Tibial artery (tissue), 4 donors: ENCODE measurements at regions of chr5 and their contacts with region 1.

Region 1: DNA sequence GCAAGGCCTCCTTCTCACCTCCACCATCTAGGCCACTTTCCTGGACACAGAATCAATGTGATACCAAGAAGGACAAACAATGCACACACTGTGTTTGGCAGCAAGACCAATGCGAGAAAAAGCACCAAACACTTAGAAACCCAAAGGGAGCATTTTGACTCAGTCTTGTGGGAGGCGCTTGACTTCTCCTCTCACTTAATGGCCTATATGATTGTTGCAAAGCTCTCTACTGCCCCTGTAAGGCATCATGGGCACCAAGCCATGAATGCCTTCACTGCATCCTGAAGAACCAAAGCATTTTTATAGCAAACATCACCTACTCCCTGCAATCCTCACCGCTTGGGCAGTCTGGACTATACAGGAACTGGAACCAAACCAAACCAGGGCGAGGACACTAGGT is 57.5 kb downstream of the CDH6 start:
- DNase-seq: no peak
- H3K4me3 ChIP-seq: no peak overlapping the region
- H3K27ac ChIP-seq: no peak overlapping the region
- H3K4me1 ChIP-seq: no peaks in the 10 kb centered on the region
- H3K27me3 ChIP-seq: no peaks in the 10 kb centered on the region
- CTCF ChIP-seq: no peak

Region 2: GRCh38 chr5:30804739-30805505 is 446.1 kb before region 1 on chr5:
- intact Hi-C with region 1: loop called (anchors 10 kb)
- DNase-seq: no peak
- H3K4me3 ChIP-seq: no peak overlapping the region
- H3K27ac ChIP-seq: no peak overlapping the region
- H3K4me1 ChIP-seq: no peaks in the 10 kb centered on the region
- H3K27me3 ChIP-seq: no peaks in the 10 kb centered on the region
- CTCF ChIP-seq: peak in 1 of 2 experiments; percentile 31